ENCODE measurements at regions of chr7 and their contacts with region 1.

Region 1: DNA sequence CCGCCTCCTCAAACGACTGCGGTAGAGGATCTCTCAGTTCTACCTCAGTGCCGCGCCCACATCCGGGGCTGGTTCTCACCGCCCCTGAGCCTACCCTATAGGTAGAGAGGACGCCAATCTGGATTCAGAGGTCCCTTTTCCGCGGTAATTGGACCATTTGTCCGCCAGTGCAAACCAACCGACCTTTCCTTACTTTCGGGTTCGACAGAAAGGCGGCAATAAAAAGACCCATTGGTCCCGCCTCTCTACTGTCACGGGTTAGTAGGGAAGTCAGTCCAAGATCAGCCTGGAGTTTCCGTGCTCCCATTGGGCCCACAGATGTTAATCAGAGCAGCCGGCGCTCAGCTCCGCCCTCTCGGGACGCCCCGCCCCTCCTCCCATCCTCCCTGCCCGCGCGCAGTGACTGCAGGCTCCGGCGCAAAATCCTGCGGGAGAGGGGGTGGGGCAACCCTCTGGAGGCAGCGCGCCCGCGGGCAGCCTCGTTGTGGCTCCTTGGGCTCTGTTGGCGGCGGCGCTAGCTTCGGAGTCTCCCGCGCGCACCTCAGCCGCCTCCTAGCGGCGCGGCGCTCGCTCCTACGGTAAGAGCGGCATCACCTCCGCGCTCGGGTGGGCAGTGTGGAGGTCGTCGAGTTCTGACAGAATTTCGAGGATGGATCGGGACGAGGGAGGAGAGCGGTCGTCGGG is at the starts of genes PHTF2 and TMEM60:
- DNase-seq: peak; percentile 96
- H3K4me3 Mint-ChIP-seq: peak within 1 kb of the TSS; percentile 91
- H3K27ac Mint-ChIP-seq: peak within 1 kb of the TSS; percentile 92
- H3K4me1 Mint-ChIP-seq: peaks cover 68% of the 10 kb centered on the region
- H3K27me3 Mint-ChIP-seq: no peaks in the 10 kb centered on the region
- total RNA-seq, gene PHTF2: 40.8 to 41.2 TPM
- total RNA-seq, gene TMEM60: 14.2 to 15.5 TPM

Region 2: DNA sequence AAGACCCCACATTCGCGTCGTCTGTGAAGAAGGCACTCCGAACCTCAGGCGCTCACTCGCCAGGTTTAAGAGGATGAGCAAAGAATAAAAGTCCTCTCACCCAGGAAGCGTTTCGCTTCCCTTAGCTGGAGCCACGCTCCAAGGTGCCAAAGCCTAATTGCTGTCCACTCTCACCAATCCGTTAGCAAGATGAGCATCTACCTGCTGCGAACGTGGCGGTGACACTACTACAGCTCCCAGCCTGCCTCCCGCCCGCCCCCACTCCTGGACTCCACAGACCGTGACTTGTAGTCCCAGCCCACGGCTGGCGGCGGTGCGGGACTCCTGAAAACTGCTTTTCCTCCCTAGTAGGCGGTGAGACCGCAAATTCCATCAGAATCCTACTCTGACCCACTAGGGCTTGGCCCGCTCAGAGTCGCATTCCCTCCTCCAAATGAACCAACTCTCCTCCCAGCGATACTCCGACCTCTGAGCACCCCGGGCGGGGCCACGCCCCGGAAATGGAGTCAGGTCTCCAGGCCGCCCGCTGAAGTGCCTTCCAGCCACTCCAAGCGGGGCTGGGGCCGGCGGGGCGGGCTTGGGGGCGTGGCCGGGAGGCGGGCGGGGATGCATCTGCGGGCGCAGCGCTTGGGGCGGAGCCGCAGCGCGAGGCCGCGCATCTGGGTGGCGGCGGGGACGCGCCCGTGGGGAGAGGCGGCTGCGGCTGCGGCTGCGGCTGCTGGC is 262.0 kb before region 1 on chr7:
- CTCF ChIA-PET with region 1: no interaction called
- POLR2A ChIA-PET with region 1: no interaction called
- intact Hi-C with region 1: loop called (anchors 2 kb)
- DNase-seq: peak; percentile 99
- H3K4me3 Mint-ChIP-seq: peak overlapping the region; percentile 97
- H3K27ac Mint-ChIP-seq: peak overlapping the region; percentile 87
- H3K4me1 Mint-ChIP-seq: peaks cover 13% of the 10 kb centered on the region
- H3K27me3 Mint-ChIP-seq: no peaks in the 10 kb centered on the region

Region 3: DNA sequence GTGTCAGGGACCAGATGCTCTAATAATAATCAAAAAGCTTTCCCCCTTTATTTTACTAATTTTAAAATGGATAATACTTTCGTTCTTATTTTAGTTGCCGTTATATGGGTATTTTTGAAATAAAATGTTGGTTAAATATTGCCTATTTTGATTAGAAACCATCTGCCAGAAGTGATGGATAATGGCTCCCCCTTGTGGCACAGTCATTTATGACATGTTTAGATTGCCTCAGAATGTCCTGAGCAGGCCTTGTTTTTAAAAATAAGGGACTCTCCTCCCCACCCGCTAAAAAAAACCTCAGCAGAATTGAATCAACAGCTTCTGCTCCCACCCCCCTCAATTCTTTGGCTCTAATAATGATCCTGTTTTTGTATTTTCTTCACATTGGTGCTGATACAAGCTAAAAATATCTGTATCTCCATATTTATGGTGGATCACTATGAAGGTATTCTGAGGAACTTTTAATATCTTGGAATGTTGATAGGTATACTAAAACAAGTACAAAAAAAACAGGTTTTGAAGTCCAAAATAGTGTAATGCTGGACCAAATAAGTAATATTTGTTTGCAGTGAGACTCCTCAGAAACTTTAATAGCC is 39.1 kb before region 1 on chr7:
- CTCF ChIA-PET with region 1: interaction called, 11 read pairs
- POLR2A ChIA-PET with region 1: no interaction called
- intact Hi-C with region 1: no loop called
- DNase-seq: peak; percentile 65
- H3K4me3 Mint-ChIP-seq: no peak overlapping the region
- H3K27ac Mint-ChIP-seq: no peak overlapping the region
- H3K4me1 Mint-ChIP-seq: peaks cover 21% of the 10 kb centered on the region
- H3K27me3 Mint-ChIP-seq: no peaks in the 10 kb centered on the region

Region 4: GRCh38 chr7:77830649-77831355 is 32.3 kb after region 1 on chr7:
- CTCF ChIA-PET with region 1: interaction called, 12 read pairs
- POLR2A ChIA-PET with region 1: interaction called, 26 read pairs
- intact Hi-C with region 1: loop called (anchors 1 kb)
- DNase-seq: no peak
- H3K4me3 Mint-ChIP-seq: peak overlapping the region; percentile 30
- H3K27ac Mint-ChIP-seq: peak overlapping the region; percentile 76
- H3K4me1 Mint-ChIP-seq: peaks cover 66% of the 10 kb centered on the region
- H3K27me3 Mint-ChIP-seq: no peaks in the 10 kb centered on the region

Region 5: GRCh38 chr7:77903597-77903996 is 105.1 kb after region 1 on chr7:
- CTCF ChIA-PET with region 1: interaction called, 4 read pairs
- POLR2A ChIA-PET with region 1: no interaction called
- intact Hi-C with region 1: loop called (anchors 2 kb)
- DNase-seq: peak; percentile 38
- H3K4me3 Mint-ChIP-seq: no peak overlapping the region
- H3K27ac Mint-ChIP-seq: no peak overlapping the region
- H3K4me1 Mint-ChIP-seq: peaks cover 5% of the 10 kb centered on the region
- H3K27me3 Mint-ChIP-seq: no peaks in the 10 kb centered on the region

Region 6: DNA sequence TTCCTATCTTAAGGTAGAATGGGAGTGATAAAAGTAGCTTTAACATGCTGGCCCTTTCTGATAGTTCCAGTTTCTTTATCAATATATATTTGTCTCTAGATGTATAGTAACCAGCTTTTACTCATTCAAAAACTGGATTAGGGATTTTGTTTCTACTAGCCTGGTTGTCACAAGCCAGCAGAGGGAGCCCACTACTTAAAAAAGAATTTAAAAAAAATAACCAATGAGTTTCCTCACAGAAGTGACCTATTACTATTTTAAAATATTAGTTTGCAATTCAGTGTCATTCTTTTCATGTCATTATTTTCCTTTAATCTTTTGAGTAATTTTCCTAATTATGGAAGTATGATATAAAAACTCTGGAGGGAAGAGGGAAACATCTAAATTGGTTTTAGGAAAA is 142.1 kb after region 1 on chr7:
- CTCF ChIA-PET with region 1: interaction called, 5 read pairs
- POLR2A ChIA-PET with region 1: no interaction called
- intact Hi-C with region 1: loop called (anchors 2 kb)
- DNase-seq: peak; percentile 18
- H3K4me3 Mint-ChIP-seq: no peak overlapping the region
- H3K27ac Mint-ChIP-seq: no peak overlapping the region
- H3K4me1 Mint-ChIP-seq: peaks cover 13% of the 10 kb centered on the region
- H3K27me3 Mint-ChIP-seq: no peaks in the 10 kb centered on the region

Measured in activated CD4-positive, alpha-beta memory T cell treated with anti-CD3 and anti-CD28 coated beads for 36 hours (primary cell).